ENCODE measurements at regions of chr4 and their contacts with region 1.

Region 1: DNA sequence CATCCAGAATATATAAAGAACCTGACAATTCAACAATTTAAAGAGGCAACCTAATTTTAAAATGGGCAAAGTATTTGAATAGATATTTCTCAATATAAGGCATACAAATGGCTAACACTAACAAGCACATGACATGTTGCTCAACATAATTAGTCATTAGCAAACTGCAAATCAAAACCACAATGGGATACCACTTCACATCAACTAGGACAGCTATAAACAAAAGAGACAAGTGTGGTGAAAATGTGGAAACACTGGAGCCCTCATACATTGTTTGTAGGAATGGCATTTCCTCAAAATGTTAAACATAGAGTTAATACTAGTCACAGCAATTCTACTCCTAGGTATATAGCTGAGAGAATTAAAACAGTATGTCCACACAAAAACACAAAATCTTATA is 96.7 kb downstream of the CORIN start:
- DNase-seq: no peak
- ATAC-seq: no peak
- H3K4me3 ChIP-seq: no peak overlapping the region
- H3K27ac ChIP-seq: no peak overlapping the region
- H3K4me1 ChIP-seq: peaks cover 0 to 35% (median under 1%) of the 10 kb centered on the region in 12 donors
- H3K27me3 ChIP-seq: no peaks in the 10 kb centered on the region
- CTCF ChIP-seq: no peak
- POLR2A ChIP-seq: no peak

Region 2: DNA sequence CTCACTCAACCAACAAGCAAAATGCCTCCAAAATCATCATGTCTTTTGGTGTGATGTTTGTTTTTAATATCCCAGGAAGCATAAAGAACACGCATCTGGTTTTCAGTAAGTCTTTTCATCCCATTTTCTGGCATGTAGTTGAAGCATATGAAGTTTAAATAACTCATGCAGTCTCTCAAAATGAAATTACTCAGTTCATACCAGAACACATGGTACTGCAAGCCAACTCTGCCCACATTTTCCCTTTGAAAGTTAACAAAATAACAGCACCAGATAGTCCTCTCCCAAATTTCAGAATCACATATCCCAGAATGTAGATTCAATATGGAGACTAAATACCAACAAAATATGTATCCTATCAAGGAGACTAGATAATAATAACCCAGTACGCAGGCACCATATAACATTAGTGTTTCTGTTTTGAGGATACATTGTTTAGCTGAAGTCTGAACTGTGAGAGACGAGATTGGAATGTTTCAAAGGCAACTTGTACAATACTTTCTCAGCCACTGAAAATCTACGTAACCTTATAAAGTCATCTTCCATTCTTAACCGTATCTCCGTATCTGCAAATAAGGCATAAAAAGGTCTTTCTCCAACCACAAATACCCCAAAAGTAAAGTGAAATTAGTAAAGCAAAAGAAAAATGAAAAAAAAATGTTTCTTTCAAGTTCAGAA is 73.6 kb after region 1 on chr4:
- intact Hi-C with region 1: loop called in 1 of 10 experiments (anchors 5 kb)
- DNase-seq: no peak
- ATAC-seq: peak in 1 of 4 donors; percentile 29
- H3K4me3 ChIP-seq: no peak overlapping the region
- H3K27ac ChIP-seq: peak overlapping the region in 6 of 12 donors; percentile 5 to 67 (median 29)
- H3K4me1 ChIP-seq: peaks cover 0 to 14% (median 0%) of the 10 kb centered on the region in 12 donors
- H3K27me3 ChIP-seq: no peaks in the 10 kb centered on the region
- CTCF ChIP-seq: no peak
- POLR2A ChIP-seq: no peak

Region 3: GRCh38 chr4:47824840-47825239 is 83.6 kb after region 1 on chr4:
- intact Hi-C with region 1: loop called in 2 of 10 experiments (anchors 2 to 5 kb)
- DNase-seq: peak; percentile 37 to 89 (median 68)
- ATAC-seq: peak; percentile 85 to 95 (median 94)
- H3K4me3 ChIP-seq: peak overlapping the region in 3 of 12 donors; percentile 0 to 22 (median 14)
- H3K27ac ChIP-seq: peak overlapping the region in 11 of 12 donors; percentile 55 to 85 (median 75)
- H3K4me1 ChIP-seq: peaks cover 0 to 31% (median 0%) of the 10 kb centered on the region in 12 donors
- H3K27me3 ChIP-seq: no peaks in the 10 kb centered on the region
- CTCF ChIP-seq: no peak
- POLR2A ChIP-seq: no peak

Measured in heart left ventricle (tissue), 16 donors.